ENCODE measurements at regions of chr11 and their contacts with region 1.

Region 1: DNA sequence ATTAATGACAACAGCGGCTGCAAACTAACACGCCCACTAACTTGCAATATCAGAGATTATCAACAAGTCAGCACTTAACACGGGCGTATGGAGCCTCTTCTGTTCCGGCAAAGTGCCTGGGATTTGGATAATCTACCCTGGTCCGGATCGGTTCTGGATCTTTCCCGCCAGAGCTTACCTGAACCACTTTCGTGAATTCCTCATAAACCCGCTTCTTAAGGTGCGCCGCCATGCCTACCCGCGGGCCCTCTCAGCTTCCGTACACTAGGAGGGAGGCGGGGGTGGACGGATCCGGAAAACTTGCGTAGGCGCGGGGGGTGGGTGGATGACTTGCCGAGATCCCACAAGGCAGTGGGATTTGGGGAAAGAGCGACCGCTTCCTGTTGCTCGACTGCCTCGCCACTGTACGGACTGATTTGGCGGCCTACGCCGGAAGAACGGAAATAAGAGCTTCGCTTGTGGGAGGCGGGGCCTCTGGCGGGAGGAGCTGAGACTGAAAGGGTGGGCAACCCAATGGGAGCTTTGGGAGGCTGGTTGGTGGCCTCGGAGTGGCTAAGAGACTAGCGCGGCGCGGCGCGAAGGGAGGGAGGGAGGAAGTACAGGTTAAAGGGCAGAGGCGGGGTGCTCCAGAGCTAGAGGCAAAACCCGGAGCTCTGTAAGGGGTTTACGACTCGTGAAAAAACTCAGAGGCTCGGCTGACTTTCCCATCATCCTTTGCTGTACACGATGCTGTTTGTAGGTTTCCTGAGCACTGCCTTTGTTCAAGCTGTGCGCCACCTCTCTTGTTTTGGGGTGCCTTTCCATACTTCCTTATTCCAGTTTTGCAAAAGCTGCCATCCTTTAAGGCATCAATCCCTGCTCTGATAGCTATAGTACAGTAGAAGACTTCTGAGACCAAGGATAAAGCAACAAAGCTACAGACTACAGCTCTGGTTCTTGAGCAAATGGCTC is at the start of gene INTS4:
- DNase-seq: peak; percentile 99
- H3K4me3 ChIP-seq: peak within 1 kb of the TSS; percentile 80
- CTCF ChIP-seq: no peak

Region 2: DNA sequence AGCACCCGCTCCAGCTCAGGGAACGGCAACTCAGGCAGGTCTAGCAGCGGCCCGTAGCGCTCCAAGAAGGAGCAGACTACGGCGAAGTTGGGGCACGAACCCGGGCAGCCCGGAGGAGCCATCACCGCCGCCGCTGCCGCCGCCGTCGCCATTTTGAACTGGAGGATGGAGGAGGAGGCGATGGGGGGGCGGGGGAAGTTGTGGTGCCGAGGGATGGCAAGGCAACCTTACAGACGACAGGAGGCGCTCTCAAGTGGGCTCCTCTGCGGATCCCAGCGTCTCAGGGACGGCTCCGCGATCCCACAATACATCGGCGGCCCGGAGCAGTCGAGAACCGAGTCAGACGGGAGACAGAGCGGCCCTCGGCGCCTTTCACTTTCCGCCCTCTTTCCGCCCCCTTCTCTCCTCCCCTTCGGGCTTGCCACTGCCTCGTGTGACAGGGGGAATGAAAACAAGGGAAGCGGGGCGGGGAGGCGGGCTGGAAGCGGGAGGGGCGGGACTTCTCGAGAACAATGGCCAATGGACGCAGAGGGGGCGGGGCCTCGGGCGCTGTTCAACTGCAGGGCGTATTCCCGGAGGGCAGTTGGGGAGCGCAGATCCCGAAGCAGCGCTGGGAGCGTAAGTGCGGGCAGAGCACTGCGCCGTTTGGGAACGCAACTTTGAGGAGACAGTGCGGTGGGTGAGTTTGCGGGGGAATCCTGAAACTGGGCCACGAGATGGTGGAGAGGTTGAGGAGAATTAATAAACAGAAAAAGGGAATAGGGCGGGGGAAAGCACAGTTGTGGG is 173.9 kb before region 1 on chr11 and contains the starts of genes AAMDC and RSF1:
- CTCF ChIA-PET with region 1: interaction called, 12 read pairs
- POLR2A ChIA-PET with region 1: interaction called, 5 read pairs
- DNase-seq: peak; percentile 93
- H3K4me3 ChIP-seq: peak within 1 kb of the TSS; percentile 89
- CTCF ChIP-seq: peak; percentile 90

Region 3: GRCh38 chr11:78131956-78132355 is 137.3 kb after region 1 on chr11:
- CTCF ChIA-PET with region 1: no interaction called
- POLR2A ChIA-PET with region 1: no interaction called
- DNase-seq: peak; percentile 70
- H3K4me3 ChIP-seq: no peak overlapping the region
- CTCF ChIP-seq: no peak

Measured in AG04449 (cell line).